ENCODE measurements at regions of chr9 and their contacts with region 1.

Region 1: GRCh38 chr9:127586537-127586936 is 25.5 kb upstream of the STXBP1 start:
- DNase-seq: peak; percentile 85
- H3K4me3 Mint-ChIP-seq: no peak overlapping the region
- H3K27ac Mint-ChIP-seq: no peak overlapping the region
- H3K4me1 Mint-ChIP-seq: peaks cover 21% of the 10 kb centered on the region
- H3K27me3 Mint-ChIP-seq: no peaks in the 10 kb centered on the region
- CTCF ChIP-seq: peak; percentile 88

Region 2: GRCh38 chr9:127450830-127451724 is 135.5 kb before region 1 on chr9 and contains the starts of genes LRSAM1 and RPL12:
- CTCF ChIA-PET with region 1: interaction called, 4 read pairs
- POLR2A ChIA-PET with region 1: interaction called, 22 read pairs
- intact Hi-C with region 1: loop called (anchors 1 kb)
- DNase-seq: peak; percentile 94
- H3K4me3 Mint-ChIP-seq: peak within 1 kb of the TSS; percentile 93
- H3K27ac Mint-ChIP-seq: peak within 1 kb of the TSS; percentile 97
- H3K4me1 Mint-ChIP-seq: peaks cover 40% of the 10 kb centered on the region
- H3K27me3 Mint-ChIP-seq: no peaks in the 10 kb centered on the region
- CTCF ChIP-seq: no peak
- total RNA-seq, gene LRSAM1: 23.5 and 26.2 TPM in 2 replicates
- total RNA-seq, gene RPL12: 3,086 and 3,252 TPM in 2 replicates

Region 3: DNA sequence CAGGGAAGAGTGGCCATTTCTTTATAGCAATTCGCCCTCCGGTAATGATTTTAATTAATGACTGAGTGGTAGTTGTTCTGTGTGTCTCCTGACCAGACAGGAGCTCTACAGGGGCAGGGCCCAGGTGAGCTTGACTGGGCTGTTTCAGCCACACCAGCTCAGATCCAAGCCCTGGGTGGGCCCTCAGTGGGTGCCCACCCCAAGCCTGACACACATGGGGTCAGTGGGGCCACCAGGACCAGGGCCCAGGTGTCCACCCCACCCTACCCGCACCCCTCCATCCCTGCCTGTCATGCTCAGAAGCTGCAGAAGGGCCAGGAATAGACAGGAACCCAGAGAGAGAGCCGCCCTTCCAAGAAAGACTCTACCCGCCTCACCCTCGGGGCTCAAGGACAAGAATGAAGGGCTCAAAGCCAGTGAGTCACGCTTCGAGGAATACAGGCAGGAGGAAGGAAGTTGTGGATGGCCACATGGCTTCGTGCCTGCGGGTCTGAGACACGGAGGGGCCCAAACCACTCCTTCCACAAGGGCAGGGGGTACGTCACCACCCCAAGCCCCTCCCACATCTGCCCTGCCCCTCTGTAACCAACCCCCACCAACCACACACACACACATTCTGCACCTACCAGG is 30.7 kb before region 1 on chr9:
- CTCF ChIA-PET with region 1: interaction called, 12 read pairs
- POLR2A ChIA-PET with region 1: interaction called, 32 read pairs
- intact Hi-C with region 1: no loop called
- DNase-seq: peak; percentile 98
- H3K4me3 Mint-ChIP-seq: peak overlapping the region; percentile 50
- H3K27ac Mint-ChIP-seq: peak overlapping the region; percentile 59
- H3K4me1 Mint-ChIP-seq: peaks cover 43% of the 10 kb centered on the region
- H3K27me3 Mint-ChIP-seq: no peaks in the 10 kb centered on the region
- CTCF ChIP-seq: no peak

Region 4: GRCh38 chr9:127611899-127612790 is 25.6 kb after region 1 on chr9 and contains the start of gene STXBP1:
- CTCF ChIA-PET with region 1: interaction called, 11 read pairs
- POLR2A ChIA-PET with region 1: interaction called, 6 read pairs
- intact Hi-C with region 1: no loop called
- DNase-seq: peak; percentile 81
- H3K4me3 Mint-ChIP-seq: peak within 1 kb of the TSS; percentile 86
- H3K27ac Mint-ChIP-seq: peak within 1 kb of the TSS; percentile 64
- H3K4me1 Mint-ChIP-seq: peaks cover 21% of the 10 kb centered on the region
- H3K27me3 Mint-ChIP-seq: no peaks in the 10 kb centered on the region
- CTCF ChIP-seq: no peak
- total RNA-seq, gene STXBP1: 20.0 and 36.6 TPM in 2 replicates

Region 5: GRCh38 chr9:127676636-127677035 is 90.1 kb after region 1 on chr9:
- CTCF ChIA-PET with region 1: no interaction called
- POLR2A ChIA-PET with region 1: no interaction called
- intact Hi-C with region 1: no loop called
- DNase-seq: peak; percentile 82
- H3K4me3 Mint-ChIP-seq: no peak overlapping the region
- H3K27ac Mint-ChIP-seq: no peak overlapping the region
- H3K4me1 Mint-ChIP-seq: peaks cover 7% of the 10 kb centered on the region
- H3K27me3 Mint-ChIP-seq: no peaks in the 10 kb centered on the region
- CTCF ChIP-seq: no peak

Region 6: DNA sequence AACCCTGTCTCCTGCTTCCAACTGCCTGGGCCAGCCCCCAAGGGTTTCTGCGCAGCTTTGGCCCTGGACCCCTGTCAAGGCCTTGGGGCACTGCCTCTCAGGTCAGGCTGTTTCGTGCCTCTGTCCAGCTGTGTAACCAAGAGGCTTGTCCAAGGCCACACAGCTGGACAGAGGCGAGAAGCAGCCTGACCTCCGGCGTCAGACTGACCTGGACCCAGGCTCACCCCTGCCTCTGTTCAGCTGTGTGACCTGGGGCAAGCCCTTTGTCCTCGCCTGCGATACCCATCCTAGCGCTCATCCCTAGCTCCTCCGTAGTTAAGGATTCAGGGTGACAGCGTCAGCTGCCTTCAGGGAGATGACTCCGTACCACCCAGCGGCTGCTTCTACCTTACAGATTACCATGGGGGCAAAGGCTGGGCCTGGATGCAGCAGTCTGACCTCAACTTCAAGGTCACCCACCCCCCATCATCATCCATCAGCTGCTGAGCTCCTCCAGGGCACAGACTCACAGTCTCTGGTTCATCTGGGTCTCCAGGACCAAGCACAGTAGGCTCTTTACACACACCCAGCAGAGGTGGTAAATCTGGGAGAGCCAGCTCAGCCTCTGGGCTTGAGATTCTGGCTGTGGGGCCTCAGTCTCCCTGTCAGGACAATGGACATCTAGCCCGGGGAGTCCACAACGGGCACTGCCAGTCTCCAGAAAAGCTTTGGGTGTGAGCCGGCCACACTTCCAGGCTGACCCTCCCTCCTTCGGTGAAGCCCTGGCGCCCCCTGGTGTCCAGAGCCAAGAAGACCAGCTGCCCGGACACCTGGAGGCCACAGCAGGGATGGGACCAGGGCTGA is 283.0 kb after region 1 on chr9:
- CTCF ChIA-PET with region 1: interaction called, 4 read pairs
- POLR2A ChIA-PET with region 1: no interaction called
- intact Hi-C with region 1: loop called (anchors 1 kb)
- DNase-seq: peak; percentile 89
- H3K4me3 Mint-ChIP-seq: no peak overlapping the region
- H3K27ac Mint-ChIP-seq: no peak overlapping the region
- H3K4me1 Mint-ChIP-seq: no peaks in the 10 kb centered on the region
- H3K27me3 Mint-ChIP-seq: no peaks in the 10 kb centered on the region
- CTCF ChIP-seq: peak; percentile 86

Measured in MCF 10A (cell line).